HCT116 (cell line): ENCODE measurements at regions of chr3 and their contacts with region 1.

Region 1: GRCh38 chr3:5479229-5479799 is 291.8 kb downstream of the EDEM1 start:
- DNase-seq: no peak
- ATAC-seq: no peak
- H3K4me3 ChIP-seq: no peak overlapping the region
- H3K27ac ChIP-seq: no peak overlapping the region
- H3K4me1 ChIP-seq: no peaks in the 10 kb centered on the region
- H3K27me3 ChIP-seq: no peaks in the 10 kb centered on the region
- CTCF ChIP-seq: no peak
- POLR2A ChIP-seq: no peak
- RAD21 ChIP-seq: no peak

Region 2: GRCh38 chr3:4385201-4385600 is 1094.1 kb before region 1 on chr3:
- CTCF ChIA-PET with region 1: no interaction called
- POLR2A ChIA-PET with region 1: no interaction called
- RAD21 ChIA-PET with region 1: no interaction called
- intact Hi-C with region 1: no loop called
- DNase-seq: no peak
- ATAC-seq: no peak
- H3K4me3 ChIP-seq: no peak overlapping the region
- H3K27ac ChIP-seq: no peak overlapping the region
- H3K4me1 ChIP-seq: no peaks in the 10 kb centered on the region
- H3K27me3 ChIP-seq: no peaks in the 10 kb centered on the region
- CTCF ChIP-seq: no peak
- POLR2A ChIP-seq: no peak
- RAD21 ChIP-seq: no peak

Region 3: DNA sequence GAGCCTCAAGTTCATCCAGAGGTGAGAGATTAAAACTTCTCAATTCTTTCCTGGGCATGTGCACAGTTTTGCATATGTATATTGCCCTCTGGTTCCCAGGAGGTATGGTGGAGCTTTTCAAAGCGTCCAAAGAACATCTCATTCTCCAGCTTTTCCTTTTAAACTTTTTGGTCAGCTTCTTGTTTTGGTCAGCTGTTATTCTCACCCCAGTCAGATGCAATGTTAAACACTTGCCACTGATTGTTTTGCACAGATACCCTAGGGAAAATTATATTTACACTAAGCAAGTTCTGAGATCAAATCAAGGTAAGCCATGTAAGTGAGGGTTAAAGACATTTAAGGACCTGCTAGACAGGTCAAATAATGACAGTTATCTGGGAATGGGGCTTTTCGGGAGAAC is 30.5 kb before region 1 on chr3:
- CTCF ChIA-PET with region 1: no interaction called
- POLR2A ChIA-PET with region 1: no interaction called
- RAD21 ChIA-PET with region 1: no interaction called
- intact Hi-C with region 1: no loop called
- DNase-seq: no peak
- ATAC-seq: no peak
- H3K4me3 ChIP-seq: no peak overlapping the region
- H3K27ac ChIP-seq: no peak overlapping the region
- H3K4me1 ChIP-seq: no peaks in the 10 kb centered on the region
- H3K27me3 ChIP-seq: peaks cover 4% of the 10 kb centered on the region; the same call in 1 of the 2 replicates
- CTCF ChIP-seq: no peak
- POLR2A ChIP-seq: no peak
- RAD21 ChIP-seq: no peak

Region 4: GRCh38 chr3:6039971-6040370 is 560.7 kb after region 1 on chr3:
- CTCF ChIA-PET with region 1: no interaction called
- POLR2A ChIA-PET with region 1: no interaction called
- RAD21 ChIA-PET with region 1: no interaction called
- intact Hi-C with region 1: loop called (anchors 5 kb)
- DNase-seq: no peak
- ATAC-seq: no peak
- H3K4me3 ChIP-seq: no peak overlapping the region
- H3K27ac ChIP-seq: no peak overlapping the region
- H3K4me1 ChIP-seq: no peaks in the 10 kb centered on the region
- H3K27me3 ChIP-seq: no peaks in the 10 kb centered on the region
- CTCF ChIP-seq: no peak
- POLR2A ChIP-seq: no peak
- RAD21 ChIP-seq: no peak